ENCODE measurements at regions of chr1 and their contacts with region 1.

Region 1: GRCh38 chr1:204446370-204447111 is 34.9 kb upstream of the PPP1R15B start:
- DNase-seq: peak; percentile 82
- H3K4me3 ChIP-seq: no peak overlapping the region
- H3K27ac ChIP-seq: peak overlapping the region; percentile 39 to 97 (median 89)
- H3K4me1 ChIP-seq: peaks cover 30 to 54% (median 33%) of the 10 kb centered on the region in 4 donors
- H3K27me3 ChIP-seq: no peaks in the 10 kb centered on the region
- CTCF ChIP-seq: peak; percentile 62 to 80 (median 71)
- EP300 ChIP-seq: no peak
- POLR2A ChIP-seq: no peak

Region 2: GRCh38 chr1:204506961-204507387 is 60.4 kb after region 1 on chr1:
- in situ Hi-C with region 1: loop called (anchors 5 to 10 kb)
- intact Hi-C with region 1: loop called (anchors 2 kb)
- DNase-seq: peak; percentile 88
- H3K4me3 ChIP-seq: peak overlapping the region; percentile 7 to 64 (median 42)
- H3K27ac ChIP-seq: peak overlapping the region; percentile 89 to 91 (median 90)
- H3K4me1 ChIP-seq: peaks cover 0 to 21% (median 15%) of the 10 kb centered on the region in 4 donors
- H3K27me3 ChIP-seq: no peaks in the 10 kb centered on the region
- CTCF ChIP-seq: no peak
- EP300 ChIP-seq: no peak
- POLR2A ChIP-seq: no peak

Region 3: DNA sequence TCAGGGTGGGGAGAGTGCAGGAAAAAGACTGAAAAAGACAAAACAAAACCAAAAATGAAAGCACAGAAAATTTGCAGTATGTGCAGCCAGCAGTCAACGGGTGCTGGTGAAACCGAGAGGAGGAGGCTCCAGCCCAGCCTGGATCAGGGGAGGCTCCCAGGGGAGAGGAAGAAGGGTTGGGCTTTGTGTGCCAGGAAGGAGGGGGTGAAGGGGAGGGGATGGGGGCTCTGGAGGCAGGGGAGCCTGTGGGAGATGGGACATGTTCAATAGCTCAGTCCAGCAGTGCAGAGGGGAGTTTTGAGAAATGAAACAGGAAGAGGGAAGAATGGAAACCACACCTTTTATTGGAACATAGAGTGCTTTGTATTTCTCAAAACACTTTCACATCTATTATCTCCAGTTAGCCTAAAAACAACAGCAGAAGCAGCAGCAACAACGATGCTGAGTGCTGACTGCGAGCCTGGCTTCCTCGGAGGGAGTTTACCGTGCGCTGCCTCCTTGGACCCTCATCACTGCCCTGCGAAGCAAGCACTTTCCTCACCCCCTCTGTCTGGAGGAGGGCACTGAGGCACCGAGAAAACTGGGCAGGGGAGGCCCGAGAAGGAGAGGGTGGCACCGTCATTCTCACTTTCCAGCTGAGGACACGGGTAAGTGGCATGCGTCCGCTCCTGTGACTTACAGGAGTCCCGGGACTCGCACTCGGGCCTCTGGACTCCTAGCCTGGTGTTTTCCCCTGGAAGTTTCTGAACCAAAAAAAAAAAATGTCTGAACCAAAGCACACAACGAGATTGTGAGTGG is 132.5 kb after region 1 on chr1:
- in situ Hi-C with region 1: no loop called
- intact Hi-C with region 1: no loop called
- DNase-seq: peak; percentile 42
- H3K4me3 ChIP-seq: peak overlapping the region in 3 of 4 donors; percentile 8 to 40 (median 15)
- H3K27ac ChIP-seq: peak overlapping the region; percentile 49 to 64 (median 52)
- H3K4me1 ChIP-seq: peaks cover 2 to 20% (median 9%) of the 10 kb centered on the region in 4 donors
- H3K27me3 ChIP-seq: no peaks in the 10 kb centered on the region
- CTCF ChIP-seq: no peak
- EP300 ChIP-seq: no peak
- POLR2A ChIP-seq: peak; percentile 36

Region 4: DNA sequence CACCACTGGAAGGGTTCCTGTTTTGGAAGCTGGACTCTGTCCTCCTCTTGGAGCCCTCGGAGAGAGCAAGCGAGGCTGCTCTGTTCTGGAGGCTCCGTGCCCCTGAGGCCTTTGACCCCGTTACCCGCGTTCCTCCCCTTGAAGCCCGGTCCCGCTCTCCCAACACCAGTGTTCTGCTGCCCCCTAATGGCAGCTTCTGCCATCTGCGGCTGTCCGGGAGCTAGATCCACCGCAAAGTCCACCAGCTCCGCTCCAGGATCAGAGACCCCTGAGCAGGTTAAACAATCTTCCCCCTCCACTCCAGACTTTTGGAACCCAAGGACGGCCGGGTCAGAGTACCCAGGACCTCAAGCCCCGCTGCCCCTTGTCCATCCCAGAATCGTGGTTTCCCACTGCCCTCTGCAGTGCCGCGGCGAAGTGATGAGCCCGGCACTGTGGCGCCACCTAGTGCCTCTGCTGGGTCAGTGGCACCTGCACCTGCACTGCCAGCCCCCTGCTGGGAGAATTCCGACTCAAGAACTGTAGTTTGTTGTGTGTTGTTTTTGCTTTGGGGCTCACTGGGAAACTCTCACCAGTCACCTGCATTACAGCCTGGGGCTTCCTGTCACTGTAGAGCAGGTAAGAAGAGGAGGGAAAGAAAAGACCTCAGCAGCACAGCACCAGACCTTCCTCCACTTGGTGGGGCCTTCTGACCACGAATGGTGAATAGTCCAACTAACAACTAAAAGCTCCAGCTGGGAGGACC is 360.6 kb after region 1 on chr1:
- in situ Hi-C with region 1: loop called in 1 of 4 experiments (anchors 25 kb)
- intact Hi-C with region 1: no loop called
- DNase-seq: peak; percentile 86
- H3K4me3 ChIP-seq: peak overlapping the region; percentile 14 to 52 (median 28)
- H3K27ac ChIP-seq: peak overlapping the region in 1 of 4 donors; percentile 52
- H3K4me1 ChIP-seq: peaks cover 0 to 26% (median 7%) of the 10 kb centered on the region in 4 donors
- H3K27me3 ChIP-seq: no peaks in the 10 kb centered on the region
- CTCF ChIP-seq: peak; percentile 96 to 99 (median 98)
- EP300 ChIP-seq: no peak
- POLR2A ChIP-seq: no peak

Measured in transverse colon (tissue), 4 donors.